HEK293 (cell line): ENCODE measurements at regions of chr18 and their contacts with region 1.

Region 1: GRCh38 chr18:46073474-46074331 is 1.6 kb upstream of the PSTPIP2 start:
- H3K4me3 ChIP-seq: no peak overlapping the region
- H3K27ac ChIP-seq: no peak overlapping the region
- H3K4me1 ChIP-seq: no peaks in the 10 kb centered on the region
- CTCF ChIP-seq: peak; percentile 21; the same call in 1 of the 2 replicates

Region 2: GRCh38 chr18:45670281-45670962 is 403.3 kb before region 1 on chr18:
- CTCF ChIA-PET with region 1: interaction called, 48 read pairs
- POLR2A ChIA-PET with region 1: no interaction called
- H3K4me3 ChIP-seq: no peak overlapping the region
- H3K27ac ChIP-seq: no peak overlapping the region
- H3K4me1 ChIP-seq: no peaks in the 10 kb centered on the region
- CTCF ChIP-seq: no peak

Region 3: GRCh38 chr18:45722899-45723298 is 350.8 kb before region 1 on chr18:
- CTCF ChIA-PET with region 1: interaction called, 11 read pairs
- POLR2A ChIA-PET with region 1: no interaction called
- H3K4me3 ChIP-seq: no peak overlapping the region
- H3K27ac ChIP-seq: no peak overlapping the region
- H3K4me1 ChIP-seq: no peaks in the 10 kb centered on the region
- CTCF ChIP-seq: no peak

Region 4: DNA sequence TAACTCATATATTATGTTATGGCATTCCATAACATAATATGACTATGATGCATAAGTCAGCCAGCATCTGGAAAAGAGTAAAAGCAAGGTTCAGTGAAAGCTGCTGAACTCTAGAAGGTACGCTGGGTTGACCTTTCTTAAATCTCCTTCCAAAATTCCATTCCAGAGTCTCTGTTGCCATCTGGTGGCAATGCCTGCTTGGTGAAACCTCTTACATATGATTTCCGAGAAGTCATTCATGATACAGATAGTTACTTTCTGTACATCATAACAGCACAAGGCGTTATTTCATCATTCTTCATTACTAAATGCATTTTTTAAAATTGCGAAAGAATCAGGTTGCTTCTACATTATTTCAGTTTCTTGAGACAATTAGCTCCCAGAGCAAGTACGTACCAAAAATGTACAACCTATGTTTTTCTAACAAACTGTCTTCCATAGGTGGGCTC is 99.6 kb before region 1 on chr18:
- CTCF ChIA-PET with region 1: interaction called, 30 read pairs
- POLR2A ChIA-PET with region 1: interaction called, 3 read pairs
- H3K4me3 ChIP-seq: no peak overlapping the region
- H3K27ac ChIP-seq: no peak overlapping the region
- H3K4me1 ChIP-seq: no peaks in the 10 kb centered on the region
- CTCF ChIP-seq: peak; percentile 62

Region 5: DNA sequence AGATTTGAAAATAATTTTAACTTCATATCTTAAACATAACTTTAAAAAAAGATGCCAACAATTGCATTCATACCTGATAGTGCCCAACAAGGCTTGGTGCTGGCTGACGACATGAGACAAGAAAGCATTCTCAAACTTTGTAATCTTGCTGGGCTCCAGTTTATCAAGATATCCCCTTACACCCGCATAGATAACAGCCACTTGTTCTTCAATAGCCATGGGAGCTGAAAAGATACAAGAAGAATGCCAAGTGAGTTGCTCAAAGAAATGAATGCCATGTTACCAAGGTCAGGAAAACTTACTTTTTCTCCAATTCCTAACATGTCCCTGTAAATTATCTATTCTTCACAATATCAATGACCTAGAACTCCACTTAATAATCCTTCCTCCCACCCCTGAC is 10.7 kb after region 1 on chr18:
- CTCF ChIA-PET with region 1: interaction called, 10 read pairs
- POLR2A ChIA-PET with region 1: no interaction called
- H3K4me3 ChIP-seq: no peak overlapping the region
- H3K27ac ChIP-seq: no peak overlapping the region
- H3K4me1 ChIP-seq: no peaks in the 10 kb centered on the region
- CTCF ChIP-seq: no peak

Region 6: DNA sequence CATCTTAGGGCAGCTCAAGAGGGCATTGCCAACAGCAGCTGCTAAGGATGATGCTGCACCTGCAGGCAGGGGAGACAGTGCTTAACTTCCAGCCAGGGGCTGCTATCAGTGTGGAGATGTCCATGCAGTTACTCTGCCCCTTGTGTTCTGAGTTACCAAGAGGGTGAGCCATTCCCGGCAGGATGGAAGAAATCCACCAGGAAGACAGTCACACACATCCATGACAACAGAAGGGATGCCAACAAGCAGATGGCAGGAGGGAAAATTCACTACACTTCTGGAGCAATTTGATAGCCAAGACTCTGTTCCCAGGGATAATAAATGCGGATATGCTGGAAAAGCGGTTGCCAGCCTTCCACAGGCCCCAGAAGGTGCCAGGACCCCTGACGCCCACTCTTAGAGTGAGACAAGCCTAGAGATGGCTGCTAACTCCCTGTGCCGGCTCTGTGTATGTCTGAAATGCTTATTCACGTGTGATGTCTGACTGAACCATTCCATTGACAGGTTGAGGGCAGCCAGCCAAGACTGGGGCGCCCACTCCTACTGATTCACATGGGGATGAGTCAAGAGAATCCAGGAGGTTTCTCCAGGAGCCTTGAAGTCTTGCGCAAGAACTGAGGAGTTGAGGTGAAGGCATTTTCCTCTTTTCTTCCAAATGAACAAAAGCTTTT is 558.8 kb after region 1 on chr18:
- CTCF ChIA-PET with region 1: no interaction called
- POLR2A ChIA-PET with region 1: no interaction called
- H3K4me3 ChIP-seq: no peak overlapping the region
- H3K27ac ChIP-seq: no peak overlapping the region
- H3K4me1 ChIP-seq: no peaks in the 10 kb centered on the region
- CTCF ChIP-seq: no peak